ENCODE measurements at regions of chr22 and their contacts with region 1.

Region 1: DNA sequence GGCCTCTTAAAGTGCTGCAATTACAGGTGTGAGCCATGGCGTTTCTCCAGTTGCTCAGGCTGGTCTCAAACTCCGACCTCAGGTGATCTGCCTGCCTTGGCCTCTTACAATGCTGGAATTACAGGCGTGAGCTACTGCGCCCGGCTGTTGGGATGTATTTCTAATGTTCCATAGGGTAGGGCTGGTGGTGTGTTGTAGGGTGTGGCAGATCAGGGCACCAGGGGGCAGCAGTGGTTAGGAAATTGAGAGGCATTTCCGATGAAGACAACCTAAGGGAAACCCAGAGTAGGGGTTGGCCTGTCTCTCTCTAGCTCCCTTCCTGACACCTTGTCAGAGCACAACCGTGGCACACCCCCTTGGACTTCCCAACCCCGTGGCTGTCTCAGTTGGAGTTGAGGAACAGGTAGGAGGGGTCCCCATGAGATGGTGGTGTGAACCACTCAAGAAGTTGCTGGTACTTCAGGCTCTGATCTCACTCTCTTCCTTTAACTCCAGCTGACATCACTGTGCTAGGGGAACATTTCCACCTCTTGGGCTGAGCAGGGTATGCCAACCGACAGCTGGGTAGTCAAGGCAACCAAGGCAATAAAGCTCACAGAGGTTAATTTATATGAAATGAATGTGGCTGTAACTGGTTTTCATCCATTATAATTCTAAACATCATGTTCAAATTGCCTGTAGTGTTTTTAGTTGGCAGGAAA is 33.0 kb downstream of the YWHAH start:
- DNase-seq: no peak
- H3K4me3 ChIP-seq: no peak overlapping the region
- H3K27me3 ChIP-seq: no peaks in the 10 kb centered on the region
- CTCF ChIP-seq: peak; percentile 79

Region 2: DNA sequence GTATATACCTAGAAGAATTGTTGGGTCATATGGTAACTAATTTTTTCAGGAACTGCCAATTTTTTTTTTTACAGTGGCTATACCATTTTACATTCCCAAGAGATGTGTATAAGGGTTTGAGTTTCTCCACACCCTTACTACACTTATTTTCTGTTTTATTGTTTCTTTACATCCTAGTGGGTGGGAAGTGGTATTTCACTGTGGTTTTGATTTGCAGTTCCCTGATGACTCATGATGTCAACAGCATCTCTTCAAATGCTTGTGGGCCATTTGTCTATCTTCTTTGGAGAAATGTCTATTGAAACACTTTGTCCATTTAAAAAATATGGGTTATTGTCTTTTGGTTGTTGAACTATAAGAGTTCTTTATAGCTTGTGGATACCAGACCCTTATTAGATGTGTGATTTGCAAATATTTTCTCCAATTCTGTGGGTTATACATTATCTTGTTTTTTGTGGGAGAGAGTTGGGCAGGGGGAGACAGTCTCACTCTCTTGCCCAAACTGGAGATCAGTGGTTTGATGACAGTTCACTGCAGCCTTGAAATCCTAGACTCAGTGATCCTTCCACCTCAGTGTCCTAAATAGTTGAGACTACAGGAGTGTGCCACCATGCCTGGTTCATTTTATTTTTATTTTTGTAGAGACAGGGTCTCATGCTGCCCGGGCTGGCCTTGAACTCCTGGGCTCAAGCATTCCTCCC is 285.0 kb before region 1 on chr22:
- CTCF ChIA-PET with region 1: no interaction called
- POLR2A ChIA-PET with region 1: no interaction called
- DNase-seq: no peak
- H3K4me3 ChIP-seq: no peak overlapping the region
- H3K27me3 ChIP-seq: no peaks in the 10 kb centered on the region
- CTCF ChIP-seq: no peak

Region 3: GRCh38 chr22:31891366-31892079 is 85.8 kb before region 1 on chr22:
- CTCF ChIA-PET with region 1: no interaction called
- POLR2A ChIA-PET with region 1: no interaction called
- DNase-seq: no peak
- H3K4me3 ChIP-seq: no peak overlapping the region
- H3K27me3 ChIP-seq: no peaks in the 10 kb centered on the region
- CTCF ChIP-seq: no peak

Region 4: GRCh38 chr22:31943976-31944699 is 33.2 kb before region 1 on chr22 and contains the start of gene YWHAH:
- CTCF ChIA-PET with region 1: no interaction called
- POLR2A ChIA-PET with region 1: no interaction called
- DNase-seq: peak; percentile 51
- H3K4me3 ChIP-seq: peak within 1 kb of the TSS; percentile 87
- H3K27me3 ChIP-seq: no peaks in the 10 kb centered on the region
- CTCF ChIP-seq: no peak
- polyA plus RNA-seq, gene YWHAH: 140 and 146 TPM in 2 replicates

Region 5: GRCh38 chr22:32080904-32081303 is 103.6 kb after region 1 on chr22:
- CTCF ChIA-PET with region 1: interaction called, 101 read pairs
- POLR2A ChIA-PET with region 1: no interaction called
- DNase-seq: no peak
- H3K4me3 ChIP-seq: no peak overlapping the region
- H3K27me3 ChIP-seq: peaks cover 8% of the 10 kb centered on the region; the same call in 1 of the 2 replicates
- CTCF ChIP-seq: peak; percentile 66

Region 6: DNA sequence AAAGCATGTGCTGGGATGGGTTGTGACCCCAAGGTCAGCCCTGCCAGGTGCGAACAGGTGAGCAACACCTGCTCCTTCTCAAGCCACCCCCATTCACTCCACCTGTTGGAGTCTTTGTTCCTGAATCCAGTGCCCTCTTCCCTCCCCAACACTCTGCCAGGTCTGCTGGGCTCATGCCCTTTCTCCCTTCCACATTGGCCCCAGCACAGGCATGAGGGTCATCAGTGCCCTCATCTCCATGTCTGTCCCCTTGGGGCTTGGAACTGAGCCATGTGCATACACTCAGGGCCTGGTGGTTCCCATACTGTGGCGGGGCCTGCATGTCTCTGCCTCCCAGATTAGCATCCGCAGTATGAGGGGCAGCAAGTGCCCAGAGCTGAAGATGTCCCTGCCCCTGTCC is 208.5 kb after region 1 on chr22:
- CTCF ChIA-PET with region 1: no interaction called
- POLR2A ChIA-PET with region 1: no interaction called
- DNase-seq: no peak
- H3K4me3 ChIP-seq: no peak overlapping the region
- H3K27me3 ChIP-seq: no peaks in the 10 kb centered on the region; the same call in 1 of the 2 replicates
- CTCF ChIP-seq: no peak

Region 7: GRCh38 chr22:32265882-32266767 is 288.8 kb after region 1 on chr22:
- CTCF ChIA-PET with region 1: interaction called, 46 read pairs
- POLR2A ChIA-PET with region 1: no interaction called
- DNase-seq: no peak
- H3K4me3 ChIP-seq: no peak overlapping the region
- H3K27me3 ChIP-seq: no peaks in the 10 kb centered on the region
- CTCF ChIP-seq: peak; percentile 90

Measured in BJ (cell line).